ENCODE measurements at regions of chr19 and their contacts with region 1.

Region 1: DNA sequence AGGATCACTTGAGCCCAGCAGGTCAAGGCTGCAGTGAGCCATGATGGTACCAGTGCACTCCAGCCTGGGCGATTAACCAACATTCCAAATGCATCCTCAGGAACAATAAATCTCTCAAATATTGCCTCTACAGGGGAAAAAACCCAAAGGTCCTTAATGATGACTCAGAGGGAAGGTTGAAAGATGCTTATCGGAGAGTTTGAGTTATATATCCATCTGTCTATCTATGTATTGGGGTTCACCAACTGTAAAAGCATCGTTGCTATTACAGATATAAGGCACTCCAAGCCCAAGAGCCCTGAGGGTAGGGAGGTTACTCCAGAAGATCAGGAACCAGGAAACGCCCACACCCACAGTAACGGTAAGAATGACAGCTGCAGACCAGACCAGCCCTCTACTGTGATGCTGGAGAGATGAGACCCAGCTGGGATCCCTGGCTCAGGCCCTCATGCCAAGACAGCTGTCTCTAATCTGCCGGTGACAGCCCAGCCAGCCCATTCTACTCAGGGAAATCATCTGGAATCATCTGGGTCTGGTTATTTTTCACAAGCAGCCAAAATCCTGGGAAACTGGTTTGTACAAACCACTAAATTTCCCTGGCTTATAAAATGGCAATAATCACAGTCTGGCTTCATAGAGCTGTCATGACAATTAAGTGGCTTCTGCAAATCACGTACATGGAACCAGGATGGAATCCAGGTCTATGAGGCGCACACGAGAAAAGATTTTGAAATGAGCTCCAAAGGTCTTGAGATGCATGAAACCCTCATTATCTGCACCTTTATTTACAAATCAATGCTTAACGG is 23.8 kb downstream of the TEX101 start:
- DNase-seq: peak; percentile 34
- H3K4me3 Mint-ChIP-seq: peak overlapping the region; percentile 37
- H3K27ac Mint-ChIP-seq: peak overlapping the region; percentile 97
- H3K4me1 Mint-ChIP-seq: peaks cover 41% of the 10 kb centered on the region
- H3K27me3 Mint-ChIP-seq: peaks cover 5% of the 10 kb centered on the region

Region 2: DNA sequence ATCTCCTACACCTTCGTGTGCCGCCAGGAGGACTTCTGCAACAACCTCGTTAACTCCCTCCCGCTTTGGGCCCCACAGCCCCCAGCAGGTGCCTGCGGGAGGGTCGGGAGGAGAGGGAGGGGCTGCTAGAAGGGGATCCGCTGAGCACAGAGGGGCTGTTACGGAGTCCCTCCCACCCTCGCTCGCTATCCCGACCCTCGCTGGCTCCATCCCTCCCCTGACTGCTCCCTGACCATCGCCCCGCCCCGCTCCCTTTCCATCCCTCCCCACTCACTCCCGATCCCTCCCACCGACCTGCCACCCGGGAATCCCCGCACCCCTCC is 84.2 kb before region 1 on chr19:
- CTCF ChIA-PET with region 1: no interaction called
- POLR2A ChIA-PET with region 1: no interaction called
- DNase-seq: no peak
- H3K4me3 Mint-ChIP-seq: no peak overlapping the region
- H3K27ac Mint-ChIP-seq: no peak overlapping the region
- H3K4me1 Mint-ChIP-seq: no peaks in the 10 kb centered on the region
- H3K27me3 Mint-ChIP-seq: peaks cover 4% of the 10 kb centered on the region

Region 3: GRCh38 chr19:43425567-43426392 is 12.7 kb before region 1 on chr19:
- CTCF ChIA-PET with region 1: interaction called, 193 read pairs
- POLR2A ChIA-PET with region 1: interaction called, 3 read pairs
- DNase-seq: no peak
- H3K4me3 Mint-ChIP-seq: no peak overlapping the region
- H3K27ac Mint-ChIP-seq: no peak overlapping the region
- H3K4me1 Mint-ChIP-seq: peaks cover 12% of the 10 kb centered on the region
- H3K27me3 Mint-ChIP-seq: peaks cover 2% of the 10 kb centered on the region

Region 4: GRCh38 chr19:43503501-43504425 is 65.3 kb after region 1 on chr19:
- CTCF ChIA-PET with region 1: interaction called, 13 read pairs
- POLR2A ChIA-PET with region 1: interaction called, 37 read pairs
- DNase-seq: peak; percentile 98
- H3K4me3 Mint-ChIP-seq: peak overlapping the region; percentile 96
- H3K27ac Mint-ChIP-seq: peak overlapping the region; percentile 97
- H3K4me1 Mint-ChIP-seq: peaks cover 32% of the 10 kb centered on the region
- H3K27me3 Mint-ChIP-seq: no peaks in the 10 kb centered on the region

Region 5: DNA sequence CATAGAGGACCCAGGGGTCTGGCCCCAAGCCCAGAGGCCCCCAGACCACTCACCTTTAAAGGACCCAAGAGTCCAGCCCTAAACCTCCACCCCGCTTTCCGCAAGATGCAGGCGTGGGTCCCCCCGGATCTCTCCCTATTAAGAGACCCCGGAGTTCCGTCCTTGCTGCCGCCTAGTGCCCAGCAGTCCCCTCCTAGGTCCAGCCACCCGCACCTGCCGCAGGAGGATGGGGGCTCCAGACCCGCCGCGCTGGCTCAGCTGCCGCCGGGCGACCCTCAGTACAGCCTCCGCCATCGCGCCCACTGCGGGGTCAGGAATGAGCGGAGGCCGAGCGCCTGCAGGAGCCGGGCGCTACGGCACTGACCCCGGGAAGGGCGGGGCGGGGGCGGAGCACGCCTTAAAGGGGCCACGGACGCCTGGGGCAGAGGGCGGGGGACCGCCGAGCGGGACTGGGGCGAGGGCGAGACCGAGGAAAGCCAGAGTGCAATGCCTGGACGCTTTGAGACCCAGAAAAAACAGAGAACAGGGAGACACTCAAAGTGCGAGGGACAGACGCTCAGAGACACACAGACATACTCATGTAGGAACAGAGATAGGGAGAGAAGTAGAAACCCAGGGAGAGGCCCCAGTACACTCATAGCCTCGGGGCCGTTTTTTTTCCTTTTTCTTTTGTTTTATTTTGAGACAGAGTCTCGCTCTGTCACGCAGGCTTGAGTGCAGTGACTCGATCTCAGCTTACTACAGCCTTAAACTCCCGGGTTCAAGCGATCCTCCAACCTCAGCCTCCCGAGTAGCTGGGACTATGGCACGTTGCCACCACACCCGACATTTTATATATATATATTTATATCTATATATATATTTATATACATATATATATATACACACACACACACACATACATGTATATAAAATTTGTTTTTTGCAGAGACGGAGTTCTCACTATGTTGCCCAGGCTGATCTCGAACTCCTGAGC is 88.7 kb after region 1 on chr19 and contains the start of gene ETHE1:
- CTCF ChIA-PET with region 1: interaction called, 198 read pairs
- POLR2A ChIA-PET with region 1: interaction called, 23 read pairs
- DNase-seq: peak; percentile 83
- H3K4me3 Mint-ChIP-seq: peak within 1 kb of the TSS; percentile 94
- H3K27ac Mint-ChIP-seq: peak within 1 kb of the TSS; percentile 79
- H3K4me1 Mint-ChIP-seq: peaks cover 28% of the 10 kb centered on the region
- H3K27me3 Mint-ChIP-seq: no peaks in the 10 kb centered on the region
- total RNA-seq, gene ETHE1: 90.7 to 91.1 TPM

Region 6: DNA sequence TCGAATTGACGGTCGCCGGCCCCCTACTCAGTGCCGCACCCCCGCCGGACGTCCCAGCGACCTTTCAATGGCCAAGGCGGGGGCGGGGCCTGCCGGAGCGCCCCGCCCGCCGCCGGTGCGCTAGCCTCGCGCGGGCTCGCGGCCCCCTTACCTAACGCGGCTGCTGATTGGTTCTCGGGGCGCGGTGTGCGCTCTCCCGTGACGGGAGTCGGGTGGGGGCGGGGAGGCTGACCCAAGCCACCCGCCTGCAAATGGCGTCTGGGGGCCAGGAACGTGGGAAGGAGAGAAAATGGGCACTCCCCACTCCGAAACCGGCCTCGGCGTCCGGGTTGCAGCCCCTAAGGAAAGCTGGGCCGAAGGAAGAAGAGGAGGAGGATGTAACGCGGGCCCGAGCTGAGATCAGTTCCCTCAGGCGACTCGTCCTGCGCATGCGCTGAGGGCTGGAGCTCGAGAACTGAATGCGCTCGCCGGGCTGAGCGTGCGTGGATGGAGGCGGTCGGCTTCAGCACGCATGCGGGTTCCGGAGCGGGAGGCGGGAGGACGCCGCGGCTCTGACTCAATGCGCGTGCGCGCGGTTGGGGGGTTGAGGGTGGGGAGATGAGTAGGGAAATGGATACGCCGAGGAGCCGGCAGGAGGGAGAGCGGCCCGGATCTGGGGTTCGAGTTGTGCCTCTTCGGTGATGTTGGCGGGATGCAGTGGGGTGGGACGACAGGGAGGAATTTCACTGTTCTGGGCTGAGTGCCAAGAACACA is 316.2 kb after region 1 on chr19 and contains the start of gene SMG9:
- CTCF ChIA-PET with region 1: interaction called, 4 read pairs
- POLR2A ChIA-PET with region 1: interaction called, 15 read pairs
- DNase-seq: peak; percentile 98
- H3K4me3 Mint-ChIP-seq: peak within 1 kb of the TSS; percentile 97
- H3K27ac Mint-ChIP-seq: peak within 1 kb of the TSS; percentile 99
- H3K4me1 Mint-ChIP-seq: peaks cover 67% of the 10 kb centered on the region
- H3K27me3 Mint-ChIP-seq: no peaks in the 10 kb centered on the region
- total RNA-seq, gene SMG9: 58.1 to 64.6 TPM

Measured in activated CD4-positive, alpha-beta memory T cell treated with anti-CD3 and anti-CD28 coated beads, Interleukin-2, amount 10 ng/mL, durations not matched to agents 7 days and 5 days (primary cell).